Activated naive CD8-positive, alpha-beta T cell treated with anti-CD3 and anti-CD28 coated beads, Interleukin-2, amount 10 ng/mL, durations not matched to agents 7 days and 5 days (primary cell): ENCODE measurements at regions of chr14 and their contacts with region 1.

Region 1: GRCh38 chr14:39071096-39071495 is 31.9 kb downstream of the SEC23A start:
- DNase-seq: no peak
- ATAC-seq: no peak
- H3K4me3 Mint-ChIP-seq: no peak overlapping the region
- H3K27ac Mint-ChIP-seq: no peak overlapping the region
- H3K4me1 Mint-ChIP-seq: peaks cover 2% of the 10 kb centered on the region
- H3K27me3 Mint-ChIP-seq: no peaks in the 10 kb centered on the region

Region 2: GRCh38 chr14:38837343-38838048 is 233.6 kb before region 1 on chr14:
- POLR2A ChIA-PET with region 1: interaction called, 10 read pairs
- DNase-seq: no peak
- ATAC-seq: no peak
- H3K4me3 Mint-ChIP-seq: no peak overlapping the region
- H3K27ac Mint-ChIP-seq: no peak overlapping the region
- H3K4me1 Mint-ChIP-seq: no peaks in the 10 kb centered on the region
- H3K27me3 Mint-ChIP-seq: no peaks in the 10 kb centered on the region

Region 3: DNA sequence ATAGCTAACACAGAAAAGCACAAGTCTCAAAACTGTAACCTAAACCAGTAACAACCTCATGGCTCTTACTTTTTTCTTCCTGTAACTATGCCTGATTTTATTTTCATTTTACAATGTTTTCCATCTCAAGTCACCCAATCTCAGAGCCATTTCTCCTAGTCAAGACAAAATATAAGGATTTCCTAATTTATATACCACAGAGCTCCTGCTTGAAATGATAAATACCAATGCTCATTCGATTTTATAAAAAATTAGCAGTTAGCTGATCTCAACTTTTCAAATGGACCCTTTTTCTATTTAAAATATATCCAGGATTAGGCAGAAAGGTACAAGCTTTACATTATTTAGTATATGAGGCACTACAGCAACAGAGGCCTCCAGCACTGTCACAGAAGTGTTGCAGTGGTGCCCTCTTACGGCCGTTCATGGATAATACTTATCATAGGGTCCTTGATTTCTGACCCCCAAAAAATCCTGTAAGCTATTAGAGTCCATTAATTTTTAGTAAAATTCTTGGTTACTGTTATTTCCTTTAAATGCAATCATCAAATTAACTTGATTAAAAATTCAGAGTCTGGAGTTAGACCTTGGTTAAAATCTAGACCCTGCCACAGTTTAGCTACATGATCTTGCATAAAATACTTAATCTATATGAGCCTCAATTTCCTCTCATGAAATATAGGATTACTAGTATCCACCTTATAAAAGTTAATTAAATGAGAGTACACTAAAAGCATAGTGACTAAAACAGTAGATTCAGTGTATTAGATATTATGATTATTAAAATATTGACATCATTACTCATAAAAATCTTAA is 36.4 kb before region 1 on chr14:
- POLR2A ChIA-PET with region 1: no interaction called
- DNase-seq: no peak
- ATAC-seq: no peak
- H3K4me3 Mint-ChIP-seq: no peak overlapping the region
- H3K27ac Mint-ChIP-seq: no peak overlapping the region
- H3K4me1 Mint-ChIP-seq: peaks cover 9% of the 10 kb centered on the region
- H3K27me3 Mint-ChIP-seq: no peaks in the 10 kb centered on the region